SK-N-SH (cell line): ENCODE measurements at regions of chr7 and their contacts with region 1.

Region 1: DNA sequence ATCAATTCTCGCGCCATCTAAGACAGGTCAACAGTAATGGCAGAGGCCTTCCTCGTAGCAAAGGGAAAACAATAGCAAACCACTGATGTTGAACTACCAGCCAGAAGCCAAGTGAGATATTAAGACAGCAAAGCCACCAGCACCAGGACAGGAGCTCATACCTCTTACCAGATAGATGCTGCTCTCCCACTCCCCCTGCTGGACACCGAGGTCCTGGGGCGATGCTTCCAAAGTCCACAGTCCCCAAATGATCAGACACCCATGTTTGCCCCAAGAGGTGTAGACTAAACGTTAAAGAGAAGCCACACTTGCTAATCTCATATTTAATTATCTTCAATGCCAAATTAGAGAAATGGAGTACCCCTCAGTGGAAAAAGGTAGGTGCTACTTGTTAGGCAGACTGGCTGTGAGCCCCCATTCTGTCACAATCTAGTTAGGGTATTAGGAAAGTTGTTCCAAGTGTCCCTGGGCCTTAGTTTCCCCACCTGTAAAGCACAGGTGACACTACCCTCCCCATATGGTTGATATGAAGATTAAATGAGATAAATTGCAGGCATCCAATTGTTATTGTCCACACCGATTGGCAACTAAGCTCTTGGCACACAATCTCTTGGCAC is 39.9 kb downstream of the TOMM7 start:
- DNase-seq: peak; percentile 76
- H3K4me3 ChIP-seq: no peak overlapping the region
- H3K27ac ChIP-seq: no peak overlapping the region
- H3K4me1 ChIP-seq: no peaks in the 10 kb centered on the region; a peak in 3 of 4 replicates
- H3K27me3 ChIP-seq: no peaks in the 10 kb centered on the region
- CTCF ChIP-seq: peak; percentile 92
- EP300 ChIP-seq: no peak
- RAD21 ChIP-seq: peak; percentile 62

Region 2: GRCh38 chr7:22762866-22763265 is 19.9 kb before region 1 on chr7:
- CTCF ChIA-PET with region 1: interaction called, 13 read pairs
- POLR2A ChIA-PET with region 1: no interaction called
- DNase-seq: no peak
- H3K4me3 ChIP-seq: no peak overlapping the region
- H3K27ac ChIP-seq: no peak overlapping the region
- H3K4me1 ChIP-seq: no peaks in the 10 kb centered on the region
- H3K27me3 ChIP-seq: peaks cover 8% of the 10 kb centered on the region; the same call in 1 of the 2 replicates
- CTCF ChIP-seq: no peak
- EP300 ChIP-seq: no peak
- RAD21 ChIP-seq: no peak

Region 3: GRCh38 chr7:22771194-22771871 is 11.4 kb before region 1 on chr7:
- CTCF ChIA-PET with region 1: interaction called, 14 read pairs
- POLR2A ChIA-PET with region 1: no interaction called
- DNase-seq: no peak
- H3K4me3 ChIP-seq: no peak overlapping the region
- H3K27ac ChIP-seq: no peak overlapping the region
- H3K4me1 ChIP-seq: no peaks in the 10 kb centered on the region
- H3K27me3 ChIP-seq: peaks cover 15% of the 10 kb centered on the region; the same call in 1 of the 2 replicates
- CTCF ChIP-seq: no peak
- EP300 ChIP-seq: no peak
- RAD21 ChIP-seq: no peak